ENCODE measurements at regions of chr13 and their contacts with region 1.

Region 1: GRCh38 chr13:33542283-33543088 is 256.9 kb upstream of the STARD13 start:
- DNase-seq: peak; percentile 98
- H3K4me3 ChIP-seq: peak overlapping the region; percentile 56 to 87 (median 66)
- H3K27ac ChIP-seq: peak overlapping the region; percentile 99
- H3K4me1 ChIP-seq: peaks cover 12% of the 10 kb centered on the region
- H3K27me3 ChIP-seq: no peaks in the 10 kb centered on the region
- CTCF ChIP-seq: peak; percentile 62 to 89

Region 2: GRCh38 chr13:32639502-32640105 is 902.9 kb before region 1 on chr13:
- CTCF ChIA-PET with region 1: no interaction called
- dilution Hi-C with region 1: no loop called
- in situ Hi-C with region 1: no loop called
- intact Hi-C with region 1: loop called (anchors 5 kb)
- DNase-seq: peak; percentile 26
- H3K4me3 ChIP-seq: no peak overlapping the region
- H3K27ac ChIP-seq: no peak overlapping the region
- H3K4me1 ChIP-seq: no peaks in the 10 kb centered on the region
- H3K27me3 ChIP-seq: no peaks in the 10 kb centered on the region
- CTCF ChIP-seq: peak; percentile 78 to 84

Region 3: GRCh38 chr13:33169273-33169980 is 373.1 kb before region 1 on chr13:
- CTCF ChIA-PET with region 1: no interaction called
- dilution Hi-C with region 1: no loop called
- in situ Hi-C with region 1: no loop called
- intact Hi-C with region 1: loop called (anchors 2 kb)
- DNase-seq: peak; percentile 86
- H3K4me3 ChIP-seq: no peak overlapping the region
- H3K27ac ChIP-seq: peak overlapping the region; percentile 84
- H3K4me1 ChIP-seq: peaks cover 43% of the 10 kb centered on the region
- H3K27me3 ChIP-seq: no peaks in the 10 kb centered on the region
- CTCF ChIP-seq: no peak

Region 4: GRCh38 chr13:33262062-33262497 is 280.4 kb before region 1 on chr13:
- CTCF ChIA-PET with region 1: no interaction called
- dilution Hi-C with region 1: no loop called
- in situ Hi-C with region 1: no loop called
- intact Hi-C with region 1: loop called (anchors 1 kb)
- DNase-seq: peak; percentile 91
- H3K4me3 ChIP-seq: no peak overlapping the region
- H3K27ac ChIP-seq: no peak overlapping the region
- H3K4me1 ChIP-seq: peaks cover 36% of the 10 kb centered on the region
- H3K27me3 ChIP-seq: no peaks in the 10 kb centered on the region
- CTCF ChIP-seq: no peak

Region 5: DNA sequence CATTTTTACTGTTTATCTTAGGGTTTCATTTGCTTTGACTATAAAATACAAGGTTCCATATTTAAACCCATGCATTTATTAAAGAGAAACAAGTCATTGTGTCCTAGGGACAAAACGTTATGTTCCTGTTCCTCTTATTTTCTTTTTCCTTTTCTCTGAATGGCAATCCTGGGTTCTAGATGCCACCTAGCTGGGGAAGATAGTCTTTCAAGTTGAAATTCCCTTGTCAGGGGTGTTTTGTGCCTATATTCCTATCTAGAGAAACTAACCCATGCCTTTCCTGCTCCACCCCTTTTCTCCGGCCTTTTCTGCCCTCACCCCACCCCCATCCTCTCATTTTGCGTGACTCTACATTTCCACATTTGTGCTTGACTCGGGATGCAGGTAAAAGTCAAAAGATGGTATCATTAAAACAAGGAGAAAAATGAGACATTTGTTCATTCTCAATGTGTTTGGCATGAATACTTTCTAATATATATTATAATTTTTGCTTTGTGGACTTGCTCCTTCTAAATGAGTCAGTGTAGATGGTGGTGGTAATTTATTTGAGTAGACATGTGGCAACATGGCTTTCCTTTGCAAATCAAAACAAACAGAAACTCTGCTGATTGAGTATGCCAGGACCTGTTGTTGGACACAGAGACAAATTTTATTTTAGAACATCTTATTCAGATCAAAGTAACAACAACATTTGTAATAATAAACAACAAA is 230.2 kb before region 1 on chr13:
- CTCF ChIA-PET with region 1: no interaction called
- dilution Hi-C with region 1: no loop called
- in situ Hi-C with region 1: no loop called
- intact Hi-C with region 1: loop called (anchors 1 kb)
- DNase-seq: peak; percentile 36
- H3K4me3 ChIP-seq: no peak overlapping the region
- H3K27ac ChIP-seq: no peak overlapping the region
- H3K4me1 ChIP-seq: no peaks in the 10 kb centered on the region
- H3K27me3 ChIP-seq: no peaks in the 10 kb centered on the region
- CTCF ChIP-seq: peak in 1 of 2 donors; percentile 45

Region 6: GRCh38 chr13:33340629-33341028 is 201.9 kb before region 1 on chr13:
- CTCF ChIA-PET with region 1: no interaction called
- dilution Hi-C with region 1: no loop called
- in situ Hi-C with region 1: no loop called
- intact Hi-C with region 1: no loop called
- DNase-seq: no peak
- H3K4me3 ChIP-seq: no peak overlapping the region
- H3K27ac ChIP-seq: no peak overlapping the region
- H3K4me1 ChIP-seq: no peaks in the 10 kb centered on the region
- H3K27me3 ChIP-seq: no peaks in the 10 kb centered on the region
- CTCF ChIP-seq: no peak

Region 7: DNA sequence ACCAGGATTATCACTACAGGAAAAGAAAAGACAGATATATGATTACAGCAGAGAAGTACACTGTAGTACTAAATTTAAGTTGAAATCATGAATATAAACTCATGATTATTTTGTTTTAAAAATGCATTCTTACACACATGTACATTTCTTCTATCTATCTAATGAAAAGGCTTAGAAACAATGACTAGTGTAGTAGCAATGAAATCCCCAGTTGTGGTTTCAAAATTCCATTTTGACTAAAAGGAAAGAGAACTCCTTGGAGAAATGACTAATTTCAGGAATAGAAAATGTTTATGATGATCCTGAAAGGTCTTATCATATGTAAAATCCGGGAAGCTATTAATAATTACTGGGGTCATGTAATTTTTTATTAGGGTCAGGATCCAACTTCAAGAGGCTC is 61.9 kb before region 1 on chr13:
- CTCF ChIA-PET with region 1: no interaction called
- dilution Hi-C with region 1: no loop called
- in situ Hi-C with region 1: no loop called
- intact Hi-C with region 1: no loop called
- DNase-seq: no peak
- H3K4me3 ChIP-seq: no peak overlapping the region
- H3K27ac ChIP-seq: no peak overlapping the region
- H3K4me1 ChIP-seq: peaks cover 11% of the 10 kb centered on the region
- H3K27me3 ChIP-seq: no peaks in the 10 kb centered on the region
- CTCF ChIP-seq: no peak

Region 8: DNA sequence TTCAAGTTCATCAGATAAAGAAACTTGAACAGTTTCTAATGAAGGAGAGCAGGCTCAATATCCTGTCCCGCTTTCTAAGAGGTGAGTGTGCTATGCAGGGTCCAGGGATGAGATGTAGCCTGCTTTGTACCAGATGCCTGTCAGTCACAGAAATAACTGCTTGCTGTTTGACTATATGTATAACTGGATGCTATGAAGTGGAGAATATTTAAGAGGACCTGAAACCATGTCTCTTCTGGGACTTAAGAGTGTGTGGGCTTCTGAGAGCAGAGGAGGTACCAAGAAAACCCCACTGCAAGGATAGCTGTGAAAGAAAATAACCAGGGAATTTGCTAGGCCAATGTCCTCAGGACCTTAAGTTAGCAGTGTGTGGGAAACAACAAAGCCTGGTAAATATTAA is 29.1 kb after region 1 on chr13:
- CTCF ChIA-PET with region 1: no interaction called
- dilution Hi-C with region 1: no loop called
- in situ Hi-C with region 1: no loop called
- intact Hi-C with region 1: no loop called
- DNase-seq: no peak
- H3K4me3 ChIP-seq: no peak overlapping the region
- H3K27ac ChIP-seq: no peak overlapping the region
- H3K4me1 ChIP-seq: peaks cover 3% of the 10 kb centered on the region
- H3K27me3 ChIP-seq: no peaks in the 10 kb centered on the region
- CTCF ChIP-seq: no peak

Region 9: GRCh38 chr13:33723772-33724435 is 181.4 kb after region 1 on chr13:
- CTCF ChIA-PET with region 1: interaction called, 7 read pairs
- dilution Hi-C with region 1: no loop called
- in situ Hi-C with region 1: loop called in 1 of 2 experiments (anchors 5 kb)
- intact Hi-C with region 1: loop called (anchors 1 kb)
- DNase-seq: peak; percentile 64
- H3K4me3 ChIP-seq: no peak overlapping the region
- H3K27ac ChIP-seq: no peak overlapping the region
- H3K4me1 ChIP-seq: peaks cover 11% of the 10 kb centered on the region
- H3K27me3 ChIP-seq: no peaks in the 10 kb centered on the region
- CTCF ChIP-seq: peak; percentile 67 to 84

Region 10: DNA sequence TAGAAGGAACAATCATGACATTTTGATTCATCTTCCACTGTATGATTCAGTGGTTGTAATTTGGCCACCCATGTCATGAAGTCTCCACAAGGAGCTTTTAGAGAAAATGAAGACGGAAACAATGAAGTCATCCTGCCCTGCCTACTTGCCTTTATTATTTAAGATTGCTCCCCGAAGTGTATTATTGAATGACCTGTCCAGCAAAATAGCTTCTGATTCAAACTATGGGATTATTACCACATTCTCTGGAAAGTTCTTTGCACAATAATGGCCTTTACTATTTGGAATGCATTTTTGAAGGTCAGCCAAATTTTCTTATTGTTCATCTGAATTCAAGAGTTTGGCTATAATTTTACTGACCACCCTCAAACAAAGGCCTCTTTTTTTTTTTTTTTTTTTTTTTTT is 197.7 kb after region 1 on chr13:
- CTCF ChIA-PET with region 1: no interaction called
- dilution Hi-C with region 1: no loop called
- in situ Hi-C with region 1: no loop called
- intact Hi-C with region 1: no loop called
- DNase-seq: peak; percentile 45
- H3K4me3 ChIP-seq: no peak overlapping the region
- H3K27ac ChIP-seq: no peak overlapping the region
- H3K4me1 ChIP-seq: no peaks in the 10 kb centered on the region
- H3K27me3 ChIP-seq: no peaks in the 10 kb centered on the region
- CTCF ChIP-seq: no peak

Region 11: GRCh38 chr13:35164324-35164932 is 1621.9 kb after region 1 on chr13:
- CTCF ChIA-PET with region 1: no interaction called
- dilution Hi-C with region 1: no loop called
- in situ Hi-C with region 1: no loop called
- intact Hi-C with region 1: loop called (anchors 5 kb)
- DNase-seq: peak; percentile 6
- H3K4me3 ChIP-seq: no peak overlapping the region
- H3K27ac ChIP-seq: no peak overlapping the region
- H3K4me1 ChIP-seq: no peaks in the 10 kb centered on the region
- H3K27me3 ChIP-seq: no peaks in the 10 kb centered on the region
- CTCF ChIP-seq: peak; percentile 50 to 63

Measured in mammary epithelial cell (primary cell).